CD8-positive, alpha-beta memory T cell (primary cell): ENCODE measurements at regions of chr11 and their contacts with region 1.

Region 1: GRCh38 chr11:67409261-67409666 is 5.4 kb downstream of the TBC1D10C start:
- DNase-seq: peak; percentile 62 to 89 (median 83)
- H3K4me3 ChIP-seq: peak overlapping the region; percentile 82
- H3K4me3 Mint-ChIP-seq: peak overlapping the region; percentile 95 to 99 (median 98)
- H3K27ac ChIP-seq: peak overlapping the region; percentile 38
- H3K27ac Mint-ChIP-seq: peak overlapping the region; percentile 45 to 99 (median 92)
- H3K4me1 ChIP-seq: peaks cover 93% of the 10 kb centered on the region
- H3K4me1 Mint-ChIP-seq: peaks cover 76 to 93% (median 82%) of the 10 kb centered on the region in 3 donors
- H3K27me3 ChIP-seq: no peaks in the 10 kb centered on the region
- H3K27me3 Mint-ChIP-seq: peaks cover 0 to 2% of the 10 kb centered on the region in 2 donors

Region 2: GRCh38 chr11:67366961-67367760 is 42.1 kb before region 1 on chr11:
- CTCF ChIA-PET with region 1: interaction called, 3 read pairs
- POLR2A ChIA-PET with region 1: interaction called, 13 read pairs
- DNase-seq: no peak
- H3K4me3 ChIP-seq: no peak overlapping the region
- H3K4me3 Mint-ChIP-seq: no peak overlapping the region
- H3K27ac ChIP-seq: no peak overlapping the region
- H3K27ac Mint-ChIP-seq: peak overlapping the region in 4 of 8 donors; percentile 44 to 80 (median 74)
- H3K4me1 ChIP-seq: peaks cover 58% of the 10 kb centered on the region
- H3K4me1 Mint-ChIP-seq: peaks cover 75 to 92% (median 84%) of the 10 kb centered on the region in 3 donors
- H3K27me3 ChIP-seq: no peaks in the 10 kb centered on the region
- H3K27me3 Mint-ChIP-seq: peaks cover 0 to 3% of the 10 kb centered on the region in 2 donors

Region 3: DNA sequence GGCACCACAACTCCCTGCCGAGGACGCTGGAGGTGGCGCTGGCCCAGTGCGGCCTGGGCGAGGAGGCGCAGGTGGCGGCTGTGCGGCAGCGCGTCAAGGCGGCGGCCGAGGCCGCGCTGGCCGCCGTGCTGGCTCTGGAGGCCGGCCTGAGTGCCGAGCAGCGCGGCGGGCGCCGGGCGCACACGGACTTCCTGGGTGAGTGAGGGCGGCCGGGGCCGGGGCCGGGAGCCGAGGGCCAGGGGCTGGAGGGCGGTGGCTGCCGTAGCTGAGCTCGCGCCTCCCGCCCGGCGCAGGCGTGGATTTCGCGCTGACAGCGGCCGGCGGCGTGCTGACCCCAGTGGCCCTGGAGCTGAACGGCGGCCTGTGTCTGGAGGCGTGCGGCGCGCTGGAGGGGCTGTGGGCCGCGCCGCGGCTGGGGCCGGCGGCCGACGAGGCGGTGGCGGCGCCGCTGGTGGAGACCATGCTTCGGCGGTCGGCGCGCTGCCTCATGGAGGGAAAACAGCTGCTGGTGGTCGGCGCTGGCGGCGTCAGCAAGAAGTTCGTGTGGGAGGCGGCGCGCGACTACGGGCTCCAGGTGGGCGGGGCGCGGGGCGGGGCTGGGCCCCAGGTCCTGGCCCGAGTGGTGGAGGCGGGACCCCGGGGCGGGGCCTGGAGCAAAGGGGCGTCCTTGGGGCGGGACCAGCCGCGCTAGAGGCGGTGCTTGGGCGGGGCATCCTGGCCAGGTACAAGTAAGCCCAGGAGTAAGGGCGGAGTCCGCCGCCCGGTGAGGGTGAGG is 11.6 kb after region 1 on chr11:
- CTCF ChIA-PET with region 1: interaction called, 108 read pairs
- POLR2A ChIA-PET with region 1: interaction called, 111 read pairs
- DNase-seq: peak; percentile 97 to 99 (median 98)
- H3K4me3 ChIP-seq: peak overlapping the region; percentile 58
- H3K4me3 Mint-ChIP-seq: peak overlapping the region; percentile 70 to 90 (median 83)
- H3K27ac ChIP-seq: peak overlapping the region; percentile 51
- H3K27ac Mint-ChIP-seq: peak overlapping the region; percentile 75 to 95 (median 88)
- H3K4me1 ChIP-seq: peaks cover 49% of the 10 kb centered on the region
- H3K4me1 Mint-ChIP-seq: peaks cover 43 to 62% (median 51%) of the 10 kb centered on the region in 3 donors
- H3K27me3 ChIP-seq: no peaks in the 10 kb centered on the region
- H3K27me3 Mint-ChIP-seq: peaks cover 0 to under 1% of the 10 kb centered on the region in 2 donors

Region 4: DNA sequence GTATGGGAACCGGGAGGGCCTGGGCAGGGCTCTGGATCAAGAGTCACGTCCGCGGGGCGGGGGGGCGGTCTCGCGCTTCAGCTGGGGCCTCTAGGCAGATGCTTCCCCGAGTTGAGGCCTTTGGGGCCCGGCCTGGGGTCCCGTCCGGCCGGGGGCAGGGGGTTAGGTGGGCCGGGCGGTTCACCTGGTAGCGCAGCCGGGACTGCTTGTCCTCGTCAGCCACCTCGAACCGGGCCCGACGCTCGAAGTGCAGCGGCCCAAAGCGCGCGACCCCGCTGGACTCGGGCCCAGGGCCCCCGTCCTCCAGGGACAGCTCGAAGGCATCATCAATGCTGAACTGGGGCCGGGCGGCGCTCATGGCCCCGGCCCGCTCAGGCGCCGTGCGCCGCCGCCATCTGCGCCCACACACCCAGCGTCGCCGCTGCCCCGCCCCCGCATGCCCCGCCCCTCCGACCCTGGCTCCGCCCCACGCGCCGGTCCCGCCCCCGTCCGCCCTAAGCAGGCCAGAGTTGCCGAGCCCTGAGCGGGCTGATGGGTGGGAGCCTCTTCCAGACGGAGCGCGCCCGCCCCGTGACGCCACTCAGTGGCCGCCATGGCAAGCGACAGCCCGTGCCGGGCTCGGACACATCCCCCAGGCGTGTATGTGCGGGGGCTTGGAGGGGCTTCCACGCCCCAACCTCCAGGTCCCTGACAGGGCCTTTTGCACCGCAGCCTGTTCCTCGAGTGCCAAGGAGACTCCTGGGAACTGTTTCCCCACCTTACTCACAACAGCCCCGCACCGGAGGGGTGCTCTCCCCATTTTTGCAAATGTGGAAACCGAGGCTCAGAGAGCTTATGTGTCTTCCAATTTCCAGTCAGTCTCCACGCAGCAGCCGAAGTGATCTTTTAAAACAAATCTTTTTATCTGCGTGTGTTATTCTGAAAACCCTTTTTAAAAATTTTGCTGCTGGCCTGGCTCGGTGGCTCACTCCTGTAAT is 59.9 kb after region 1 on chr11 and contains the start of gene TMEM134:
- CTCF ChIA-PET with region 1: interaction called, 4 read pairs
- POLR2A ChIA-PET with region 1: interaction called, 15 read pairs
- DNase-seq: peak; percentile 86 to 95 (median 87)
- H3K4me3 ChIP-seq: peak within 1 kb of the TSS; percentile 74
- H3K4me3 Mint-ChIP-seq: peak within 1 kb of the TSS; percentile 87 to 92 (median 88)
- H3K27ac ChIP-seq: peak within 1 kb of the TSS; percentile 70
- H3K27ac Mint-ChIP-seq: peak within 1 kb of the TSS; percentile 64 to 94 (median 88)
- H3K4me1 ChIP-seq: peaks cover 34% of the 10 kb centered on the region
- H3K4me1 Mint-ChIP-seq: peaks cover 11 to 42% (median 29%) of the 10 kb centered on the region in 3 donors
- H3K27me3 ChIP-seq: no peaks in the 10 kb centered on the region
- H3K27me3 Mint-ChIP-seq: no peaks in the 10 kb centered on the region
- total RNA-seq, gene TMEM134: 49.6 to 57.9 TPM

Region 5: DNA sequence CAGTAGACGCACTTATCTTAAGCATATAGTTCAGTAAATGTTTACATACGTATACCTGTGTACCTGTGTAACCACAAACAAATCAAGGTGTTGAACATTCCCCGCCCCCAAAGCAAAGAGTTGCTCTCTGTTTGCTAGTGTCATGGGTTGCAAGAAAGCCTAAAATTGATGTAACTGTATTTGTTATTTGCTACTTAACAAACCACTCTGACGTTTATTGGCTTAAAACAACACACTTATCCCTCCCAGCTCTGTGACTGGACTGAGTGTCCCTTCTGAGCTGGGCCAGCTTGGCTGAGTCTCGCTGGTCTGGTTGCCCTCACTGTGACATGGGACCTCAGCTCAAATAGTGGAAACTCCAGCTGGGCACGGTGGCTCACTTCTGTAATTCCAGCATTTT is 139.4 kb after region 1 on chr11:
- CTCF ChIA-PET with region 1: no interaction called
- POLR2A ChIA-PET with region 1: no interaction called
- DNase-seq: no peak
- H3K4me3 ChIP-seq: no peak overlapping the region
- H3K4me3 Mint-ChIP-seq: no peak overlapping the region
- H3K27ac ChIP-seq: no peak overlapping the region
- H3K27ac Mint-ChIP-seq: no peak overlapping the region
- H3K4me1 ChIP-seq: no peaks in the 10 kb centered on the region
- H3K4me1 Mint-ChIP-seq: no peaks in the 10 kb centered on the region
- H3K27me3 ChIP-seq: no peaks in the 10 kb centered on the region
- H3K27me3 Mint-ChIP-seq: peaks cover 4% of the 10 kb centered on the region in 2 donors